Endothelial cell of umbilical vein (primary cell): ENCODE measurements at regions of chr20 and their contacts with region 1.

Region 1: GRCh38 chr20:20052074-20052970 is at the starts of genes CFAP61 and CRNKL1:
- DNase-seq: peak; percentile 98
- H3K4me3 ChIP-seq: peak within 1 kb of the TSS; percentile 49 to 95 (median 69)
- H3K27ac ChIP-seq: peak within 1 kb of the TSS; percentile 49
- H3K4me1 ChIP-seq: peaks cover 8% of the 10 kb centered on the region
- H3K27me3 ChIP-seq: peaks cover 9 to 23% of the 10 kb centered on the region in 2 experiments
- CTCF ChIP-seq: peak in 1 of 2 donors; percentile 15
- POLR2A ChIP-seq: peak; percentile 29
- total RNA-seq, gene CFAP61: not detected in 2 replicates
- total RNA-seq, gene CRNKL1: 20.6 and 22.3 TPM in 2 replicates

Region 2: GRCh38 chr20:19692685-19693119 is 359.6 kb before region 1 on chr20:
- CTCF ChIA-PET with region 1: interaction called, 9 read pairs
- POLR2A ChIA-PET with region 1: no interaction called
- dilution Hi-C with region 1: no loop called
- intact Hi-C with region 1: loop called (anchors 5 kb)
- DNase-seq: peak; percentile 68
- H3K4me3 ChIP-seq: no peak overlapping the region
- H3K27ac ChIP-seq: no peak overlapping the region
- H3K4me1 ChIP-seq: peaks cover 5% of the 10 kb centered on the region
- H3K27me3 ChIP-seq: no peaks in the 10 kb centered on the region
- CTCF ChIP-seq: peak; percentile 84 to 87
- POLR2A ChIP-seq: no peak

Region 3: DNA sequence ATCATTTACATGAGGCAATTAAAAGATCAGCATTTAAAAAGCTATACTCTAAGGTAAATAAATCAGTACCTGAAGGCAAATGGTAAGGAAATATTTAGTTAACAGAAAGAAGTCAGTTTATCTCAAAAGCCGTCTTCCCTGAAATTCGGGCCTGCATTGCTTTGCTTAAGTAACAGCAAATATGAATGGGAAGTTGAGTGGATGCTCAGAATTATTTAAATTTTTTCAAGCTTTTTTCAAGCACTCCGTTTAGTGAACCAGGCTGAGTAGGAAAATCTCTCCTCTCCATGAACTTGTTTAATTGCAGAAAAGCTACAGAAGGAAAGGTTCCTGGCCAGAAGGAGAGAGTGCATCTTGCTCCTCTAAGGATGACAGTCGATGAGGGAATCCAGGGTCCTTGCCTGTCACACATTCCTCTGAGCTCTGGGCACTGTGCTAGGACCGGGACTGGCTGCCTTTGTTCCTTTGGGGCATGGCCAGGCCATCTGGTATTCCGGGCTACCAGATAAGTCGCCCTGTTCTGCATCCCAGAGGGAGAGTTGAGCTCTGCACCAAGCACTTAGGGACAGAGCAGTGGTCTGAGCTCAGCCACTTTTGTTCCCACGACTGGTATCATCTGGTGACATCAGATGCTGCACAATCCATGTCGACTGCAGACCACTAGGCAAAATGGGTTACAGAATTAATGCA is 216.6 kb before region 1 on chr20:
- CTCF ChIA-PET with region 1: no interaction called
- POLR2A ChIA-PET with region 1: no interaction called
- dilution Hi-C with region 1: no loop called
- intact Hi-C with region 1: no loop called
- DNase-seq: no peak
- H3K4me3 ChIP-seq: no peak overlapping the region
- H3K27ac ChIP-seq: no peak overlapping the region
- H3K4me1 ChIP-seq: peaks cover 9% of the 10 kb centered on the region
- H3K27me3 ChIP-seq: no peaks in the 10 kb centered on the region
- CTCF ChIP-seq: no peak
- POLR2A ChIP-seq: no peak

Region 4: GRCh38 chr20:20017001-20017843 is 35.1 kb before region 1 on chr20 and contains the start of gene NAA20:
- CTCF ChIA-PET with region 1: interaction called, 5 read pairs
- POLR2A ChIA-PET with region 1: interaction called, 3 read pairs
- dilution Hi-C with region 1: no loop called
- intact Hi-C with region 1: loop called (anchors 1 kb)
- DNase-seq: peak; percentile 92
- H3K4me3 ChIP-seq: peak within 1 kb of the TSS; percentile 55 to 60 (median 57)
- H3K27ac ChIP-seq: peak within 1 kb of the TSS; percentile 60
- H3K4me1 ChIP-seq: peaks cover 13% of the 10 kb centered on the region
- H3K27me3 ChIP-seq: no peaks in the 10 kb centered on the region
- CTCF ChIP-seq: peak; percentile 47 to 87
- POLR2A ChIP-seq: no peak
- total RNA-seq, gene NAA20: 73.4 and 77.3 TPM in 2 replicates

Region 5: GRCh38 chr20:20037960-20038359 is 14.4 kb before region 1 on chr20:
- CTCF ChIA-PET with region 1: interaction called, 7 read pairs
- POLR2A ChIA-PET with region 1: interaction called, 11 read pairs
- dilution Hi-C with region 1: no loop called
- intact Hi-C with region 1: loop called (anchors 1 kb)
- DNase-seq: peak; percentile 82
- H3K4me3 ChIP-seq: no peak overlapping the region
- H3K27ac ChIP-seq: peak overlapping the region; percentile 25
- H3K4me1 ChIP-seq: peaks cover 19% of the 10 kb centered on the region
- H3K27me3 ChIP-seq: no peaks in the 10 kb centered on the region
- CTCF ChIP-seq: no peak
- POLR2A ChIP-seq: no peak

Region 6: DNA sequence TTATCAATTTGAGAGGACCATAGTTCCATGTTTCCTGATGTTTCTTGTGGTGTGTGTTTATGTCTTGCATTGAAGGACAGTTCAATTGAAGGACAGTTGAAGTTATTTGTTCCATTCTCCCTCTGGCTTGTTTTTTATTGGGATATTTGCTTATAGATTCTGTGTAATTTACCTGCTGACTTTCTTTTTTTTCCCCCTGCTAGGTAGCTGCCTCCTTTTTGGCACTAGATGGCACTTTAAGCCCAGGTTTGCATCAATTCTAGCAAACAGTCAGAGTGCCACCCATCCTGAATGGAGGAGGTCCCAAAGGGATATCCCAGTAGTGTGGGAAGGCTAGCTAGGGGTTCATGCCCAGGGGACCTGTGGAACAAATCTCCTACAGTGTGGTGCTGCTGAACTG is 78.1 kb after region 1 on chr20:
- CTCF ChIA-PET with region 1: no interaction called
- POLR2A ChIA-PET with region 1: no interaction called
- dilution Hi-C with region 1: no loop called
- intact Hi-C with region 1: no loop called
- DNase-seq: peak; percentile 12
- H3K4me3 ChIP-seq: no peak overlapping the region
- H3K27ac ChIP-seq: no peak overlapping the region
- H3K4me1 ChIP-seq: peaks cover 6% of the 10 kb centered on the region
- H3K27me3 ChIP-seq: peaks cover 1 to 4% of the 10 kb centered on the region in 2 experiments
- CTCF ChIP-seq: peak in 1 of 2 donors; percentile 1
- POLR2A ChIP-seq: no peak